ENCODE measurements at regions of chr16 and their contacts with region 1.

Region 1: GRCh38 chr16:30609926-30610839 is at the start of gene ZNF689:
- DNase-seq: peak; percentile 98
- H3K4me3 Mint-ChIP-seq: peak within 1 kb of the TSS; percentile 89
- H3K27ac Mint-ChIP-seq: peak within 1 kb of the TSS; percentile 94
- H3K4me1 Mint-ChIP-seq: peaks cover 15% of the 10 kb centered on the region
- H3K27me3 Mint-ChIP-seq: no peaks in the 10 kb centered on the region
- total RNA-seq, gene ZNF689: 8.7 to 9.9 TPM

Region 2: GRCh38 chr16:30628627-30629540 is 18.7 kb after region 1 on chr16:
- CTCF ChIA-PET with region 1: interaction called, 34 read pairs
- POLR2A ChIA-PET with region 1: interaction called, 4 read pairs
- intact Hi-C with region 1: no loop called
- DNase-seq: peak; percentile 94
- H3K4me3 Mint-ChIP-seq: peak overlapping the region; percentile 60
- H3K27ac Mint-ChIP-seq: peak overlapping the region; percentile 57
- H3K4me1 Mint-ChIP-seq: peaks cover 4% of the 10 kb centered on the region
- H3K27me3 Mint-ChIP-seq: no peaks in the 10 kb centered on the region